Activated CD8-positive, alpha-beta T cell treated with anti-CD3 and anti-CD28 coated beads, Interleukin-2, amount 10 ng/mL, durations not matched to agents 7 days and 5 days (primary cell): ENCODE measurements at regions of chr2 and their contacts with region 1.

Region 1: DNA sequence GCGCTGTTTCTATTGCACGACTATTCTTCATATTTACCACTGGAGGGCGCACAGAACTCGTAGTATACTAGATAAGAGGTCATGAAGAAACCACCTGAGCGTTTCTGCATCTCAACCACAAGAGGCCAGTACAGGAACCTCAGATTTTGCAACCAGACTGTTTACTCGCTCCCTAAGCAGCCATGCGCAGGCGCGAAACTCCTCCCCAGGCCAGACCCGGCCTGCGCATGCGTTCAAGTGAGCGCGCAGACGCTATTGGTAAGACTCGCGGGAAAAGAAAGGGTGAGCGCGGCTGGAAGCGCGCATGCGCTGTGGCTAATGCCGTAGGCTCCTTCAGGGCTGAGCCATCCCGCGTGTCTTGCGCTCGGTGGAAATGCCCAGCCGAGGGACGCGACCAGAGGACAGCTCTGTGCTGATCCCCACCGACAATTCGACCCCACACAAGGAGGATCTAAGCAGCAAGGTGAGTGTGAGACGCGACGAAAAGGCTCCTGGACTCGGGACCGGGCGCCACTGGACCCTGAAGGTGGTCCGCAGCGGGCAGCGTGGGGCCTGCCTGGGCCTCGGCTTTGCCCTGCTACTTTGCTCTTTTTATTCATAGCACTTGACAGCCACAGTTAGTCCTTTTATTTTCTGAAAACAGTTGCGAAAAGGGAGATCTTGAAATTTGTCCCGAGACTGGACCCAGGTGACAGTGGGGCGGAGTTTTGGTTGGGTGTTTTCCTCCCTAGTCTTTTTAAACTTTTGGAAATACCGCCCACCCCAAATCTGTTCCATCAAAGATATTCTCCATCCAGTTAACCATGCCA is at the start of gene ASNSD1:
- DNase-seq: peak; percentile 98
- ATAC-seq: peak; percentile 91
- H3K4me3 Mint-ChIP-seq: no peak within 1 kb of the TSS
- H3K27ac Mint-ChIP-seq: no peak within 1 kb of the TSS
- H3K4me1 Mint-ChIP-seq: peaks cover 48% of the 10 kb centered on the region
- H3K27me3 Mint-ChIP-seq: no peaks in the 10 kb centered on the region
- total RNA-seq, gene ASNSD1: 36.9 to 39.4 TPM

Region 2: GRCh38 chr2:189440947-189441708 is 220.2 kb before region 1 on chr2 and contains the start of gene WDR75:
- CTCF ChIA-PET with region 1: interaction called, 5 read pairs
- POLR2A ChIA-PET with region 1: interaction called, 16 read pairs
- DNase-seq: peak; percentile 95
- ATAC-seq: peak; percentile 94
- H3K4me3 Mint-ChIP-seq: peak within 1 kb of the TSS; percentile 98
- H3K27ac Mint-ChIP-seq: peak within 1 kb of the TSS; percentile 100
- H3K4me1 Mint-ChIP-seq: peaks cover 15% of the 10 kb centered on the region
- H3K27me3 Mint-ChIP-seq: peaks cover 3% of the 10 kb centered on the region
- total RNA-seq, gene WDR75: 42.8 to 44.2 TPM

Region 3: DNA sequence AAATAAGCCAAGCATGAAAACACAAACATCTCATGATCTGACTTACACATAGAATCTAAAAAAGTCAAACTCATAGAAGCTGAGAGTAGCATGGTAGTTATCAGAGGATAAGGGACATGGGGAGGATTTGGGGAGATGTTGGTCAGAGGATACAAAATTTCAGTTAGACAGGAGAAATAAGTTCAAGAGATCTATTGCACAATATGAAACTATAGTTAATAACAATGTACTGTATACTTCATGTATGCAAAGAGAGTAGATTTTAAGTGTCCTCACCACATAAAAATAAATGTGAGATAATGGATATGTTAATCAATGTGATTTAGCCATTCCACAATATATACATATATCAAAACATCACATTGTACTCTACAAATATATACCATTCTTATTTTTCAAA is 10.1 kb before region 1 on chr2:
- CTCF ChIA-PET with region 1: interaction called, 10 read pairs
- POLR2A ChIA-PET with region 1: no interaction called
- DNase-seq: no peak
- ATAC-seq: no peak
- H3K4me3 Mint-ChIP-seq: no peak overlapping the region
- H3K27ac Mint-ChIP-seq: no peak overlapping the region
- H3K4me1 Mint-ChIP-seq: peaks cover 7% of the 10 kb centered on the region
- H3K27me3 Mint-ChIP-seq: no peaks in the 10 kb centered on the region

Region 4: DNA sequence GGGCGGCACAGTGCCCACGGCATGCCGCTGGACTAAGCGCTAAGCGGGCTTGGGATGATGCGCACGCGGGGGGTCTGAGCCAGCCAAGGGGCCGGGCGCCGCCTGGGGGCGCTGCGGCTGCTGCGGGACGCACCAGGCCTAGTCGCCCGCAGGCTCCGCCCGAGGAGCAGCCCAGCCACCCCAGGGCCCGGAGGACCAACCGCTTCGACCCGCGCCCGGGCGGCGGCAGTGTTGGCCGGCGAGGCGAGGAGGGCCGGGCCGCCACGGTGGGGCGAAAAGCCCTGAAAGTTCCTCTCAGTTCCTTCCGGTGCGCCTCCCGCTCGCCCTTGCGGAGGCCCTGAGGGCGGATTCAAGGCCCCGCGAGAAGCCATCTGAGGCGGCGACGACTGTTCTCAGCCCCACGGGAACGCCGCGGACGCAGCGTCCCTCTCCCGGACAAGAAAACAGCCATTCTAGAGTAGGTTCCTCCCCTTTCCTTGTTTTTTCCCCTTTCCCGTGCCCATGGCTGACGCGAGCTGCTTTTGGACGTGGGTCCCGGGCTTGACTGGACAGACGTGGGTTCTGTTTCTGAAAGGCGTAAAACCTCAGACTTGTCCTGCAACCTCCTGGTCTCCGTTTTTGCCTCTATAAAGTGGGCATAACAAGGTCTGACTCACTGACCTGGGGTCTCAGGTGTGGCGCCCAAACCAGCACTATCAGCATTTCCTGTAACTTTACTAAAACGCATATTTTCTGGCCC is 13.2 kb after region 1 on chr2 and contains the start of gene ANKAR:
- CTCF ChIA-PET with region 1: interaction called, 136 read pairs
- POLR2A ChIA-PET with region 1: interaction called, 5 read pairs
- DNase-seq: peak; percentile 77
- ATAC-seq: peak; percentile 97
- H3K4me3 Mint-ChIP-seq: peak within 1 kb of the TSS; percentile 88
- H3K27ac Mint-ChIP-seq: peak within 1 kb of the TSS; percentile 96
- H3K4me1 Mint-ChIP-seq: peaks cover 30% of the 10 kb centered on the region
- H3K27me3 Mint-ChIP-seq: no peaks in the 10 kb centered on the region
- total RNA-seq, gene ANKAR: 4.8 to 5.2 TPM

Region 5: GRCh38 chr2:189698020-189698887 is 36.9 kb after region 1 on chr2:
- CTCF ChIA-PET with region 1: interaction called, 103 read pairs
- POLR2A ChIA-PET with region 1: no interaction called
- DNase-seq: peak; percentile 62
- ATAC-seq: peak; percentile 58
- H3K4me3 Mint-ChIP-seq: no peak overlapping the region
- H3K27ac Mint-ChIP-seq: no peak overlapping the region
- H3K4me1 Mint-ChIP-seq: peaks cover 4% of the 10 kb centered on the region
- H3K27me3 Mint-ChIP-seq: no peaks in the 10 kb centered on the region

Region 6: DNA sequence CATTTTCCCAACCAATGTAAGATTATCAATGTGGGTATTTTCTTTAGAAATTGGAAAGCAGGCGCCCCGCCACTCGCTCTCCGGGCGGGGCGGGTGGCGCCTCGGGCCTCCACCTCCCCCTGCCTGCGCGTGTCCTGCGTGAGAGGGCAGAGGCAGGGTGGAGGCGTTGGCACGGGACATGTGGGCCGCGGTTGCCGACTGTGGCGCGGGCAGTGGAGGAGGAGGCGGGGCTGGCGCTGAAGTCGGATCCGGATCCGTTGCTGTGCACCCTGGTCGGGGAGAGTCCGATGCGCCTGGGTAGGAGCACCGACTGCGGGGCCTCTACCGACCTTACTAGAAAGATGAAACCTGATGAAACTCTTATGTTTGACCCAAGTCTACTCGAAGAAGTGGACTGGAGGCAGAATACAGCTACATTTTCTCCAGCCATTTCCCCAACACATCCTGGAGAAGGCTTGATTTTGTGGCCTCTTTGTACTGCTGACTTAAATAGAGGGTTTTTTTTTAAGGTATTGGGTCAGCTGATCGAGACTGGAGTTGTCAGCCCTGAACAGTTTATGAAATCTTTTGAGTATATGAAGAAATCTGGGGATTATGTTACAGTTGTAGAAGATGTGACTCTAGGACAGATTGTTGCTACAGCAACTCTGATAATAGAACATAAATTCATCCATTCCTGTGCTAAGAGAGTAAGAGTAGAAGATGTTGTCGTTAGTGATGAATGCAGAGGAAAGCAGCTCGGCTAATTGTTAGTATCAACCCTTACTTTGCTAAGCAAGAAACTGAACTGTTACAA is 160.8 kb after region 1 on chr2:
- CTCF ChIA-PET with region 1: no interaction called
- POLR2A ChIA-PET with region 1: no interaction called
- DNase-seq: no peak
- ATAC-seq: no peak
- H3K4me3 Mint-ChIP-seq: no peak overlapping the region
- H3K27ac Mint-ChIP-seq: no peak overlapping the region
- H3K4me1 Mint-ChIP-seq: no peaks in the 10 kb centered on the region
- H3K27me3 Mint-ChIP-seq: no peaks in the 10 kb centered on the region

Region 7: GRCh38 chr2:189874586-189875320 is 213.4 kb after region 1 on chr2:
- CTCF ChIA-PET with region 1: no interaction called
- POLR2A ChIA-PET with region 1: no interaction called
- DNase-seq: no peak
- ATAC-seq: peak; percentile 78
- H3K4me3 Mint-ChIP-seq: no peak overlapping the region
- H3K27ac Mint-ChIP-seq: peak overlapping the region; percentile 70
- H3K4me1 Mint-ChIP-seq: peaks cover 15% of the 10 kb centered on the region
- H3K27me3 Mint-ChIP-seq: no peaks in the 10 kb centered on the region